ENCODE measurements at regions of chr12 and their contacts with region 1.

Region 1: GRCh38 chr12:123171967-123172366 is 21.1 kb upstream of the PITPNM2 start:
- DNase-seq: no peak
- ATAC-seq: no peak
- H3K4me3 ChIP-seq: no peak overlapping the region
- H3K4me3 Mint-ChIP-seq: no peak overlapping the region
- H3K27ac ChIP-seq: no peak overlapping the region
- H3K27ac Mint-ChIP-seq: no peak overlapping the region
- H3K4me1 ChIP-seq: no peaks in the 10 kb centered on the region
- H3K4me1 Mint-ChIP-seq: no peaks in the 10 kb centered on the region
- H3K27me3 ChIP-seq: no peaks in the 10 kb centered on the region
- H3K27me3 Mint-ChIP-seq: no peaks in the 10 kb centered on the region
- CTCF ChIP-seq: no peak

Region 2: DNA sequence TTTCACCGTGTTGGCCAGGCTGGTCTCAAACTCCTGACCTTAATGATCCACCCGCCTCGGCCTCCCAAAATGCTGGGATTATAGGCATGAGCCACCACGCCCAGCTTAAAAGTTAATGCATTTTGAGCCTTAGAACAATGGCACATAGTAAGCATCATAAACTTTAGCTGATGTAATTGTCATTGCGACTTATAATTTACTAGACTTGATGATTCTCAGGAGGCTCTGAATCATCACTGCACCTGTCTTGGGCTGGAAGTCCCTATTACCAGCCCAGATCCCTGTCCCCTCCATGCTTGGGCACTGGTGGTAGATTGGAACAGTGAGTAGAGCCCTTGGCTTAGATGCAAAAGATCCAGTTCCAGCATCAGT is 238.1 kb after region 1 on chr12:
- CTCF ChIA-PET with region 1: no interaction called
- POLR2A ChIA-PET with region 1: interaction called, 10 read pairs
- intact Hi-C with region 1: no loop called
- DNase-seq: no peak
- ATAC-seq: no peak
- H3K4me3 ChIP-seq: no peak overlapping the region
- H3K4me3 Mint-ChIP-seq: no peak overlapping the region
- H3K27ac ChIP-seq: no peak overlapping the region
- H3K27ac Mint-ChIP-seq: peak overlapping the region; percentile 64
- H3K4me1 ChIP-seq: no peaks in the 10 kb centered on the region
- H3K4me1 Mint-ChIP-seq: peaks cover 3% of the 10 kb centered on the region
- H3K27me3 ChIP-seq: no peaks in the 10 kb centered on the region
- H3K27me3 Mint-ChIP-seq: no peaks in the 10 kb centered on the region
- CTCF ChIP-seq: no peak

Measured in B cell (primary cell).